WTC11 (cell line): ENCODE measurements at regions of chr3 and their contacts with region 1.

Region 1: DNA sequence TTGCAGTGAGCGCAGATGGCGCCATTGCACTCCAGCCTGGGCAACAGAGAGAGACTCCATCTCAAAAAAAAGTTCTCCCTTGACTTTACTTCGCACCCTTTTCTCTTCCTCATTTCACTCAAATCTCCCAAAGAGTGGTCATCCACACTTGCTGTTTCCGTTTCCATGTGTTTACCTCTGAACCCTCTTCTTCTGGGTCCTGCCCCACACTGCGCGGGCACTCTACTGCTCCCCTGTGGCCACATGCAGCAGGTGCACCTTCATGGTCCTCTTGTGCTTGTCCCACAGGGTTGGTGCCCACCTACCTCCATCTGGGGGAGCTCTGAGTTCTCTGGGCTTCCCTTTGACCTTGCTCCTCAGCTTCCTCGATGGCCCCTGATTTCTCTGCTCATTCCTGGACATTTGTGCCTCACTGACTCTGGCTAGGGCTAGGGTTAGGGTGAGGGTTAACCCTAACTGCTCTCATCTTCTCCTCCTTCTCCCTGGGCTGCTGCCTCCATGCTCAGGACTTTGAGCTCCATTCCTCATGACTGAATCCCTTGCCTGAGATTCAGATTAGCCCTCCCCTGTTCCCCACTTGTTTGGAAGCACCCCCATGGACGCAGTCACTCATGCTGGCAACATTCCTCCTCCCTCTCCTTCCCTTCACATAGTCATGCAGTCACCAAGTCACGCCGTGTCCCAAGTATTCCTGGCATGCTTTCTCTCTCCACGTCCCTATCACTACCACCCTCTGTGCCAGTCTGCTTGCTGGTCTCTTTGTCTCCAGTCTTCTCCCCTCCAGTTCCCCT is 26.6 kb upstream of the KY start:
- DNase-seq: peak; percentile 80
- ATAC-seq: peak; percentile 100
- H3K4me3 Mint-ChIP-seq: no peak overlapping the region
- H3K27ac Mint-ChIP-seq: no peak overlapping the region
- H3K4me1 Mint-ChIP-seq: no peaks in the 10 kb centered on the region; the same call in 1 of the 2 replicates
- H3K27me3 Mint-ChIP-seq: peaks cover 11% of the 10 kb centered on the region
- CTCF ChIP-seq: peak; percentile 69

Region 2: DNA sequence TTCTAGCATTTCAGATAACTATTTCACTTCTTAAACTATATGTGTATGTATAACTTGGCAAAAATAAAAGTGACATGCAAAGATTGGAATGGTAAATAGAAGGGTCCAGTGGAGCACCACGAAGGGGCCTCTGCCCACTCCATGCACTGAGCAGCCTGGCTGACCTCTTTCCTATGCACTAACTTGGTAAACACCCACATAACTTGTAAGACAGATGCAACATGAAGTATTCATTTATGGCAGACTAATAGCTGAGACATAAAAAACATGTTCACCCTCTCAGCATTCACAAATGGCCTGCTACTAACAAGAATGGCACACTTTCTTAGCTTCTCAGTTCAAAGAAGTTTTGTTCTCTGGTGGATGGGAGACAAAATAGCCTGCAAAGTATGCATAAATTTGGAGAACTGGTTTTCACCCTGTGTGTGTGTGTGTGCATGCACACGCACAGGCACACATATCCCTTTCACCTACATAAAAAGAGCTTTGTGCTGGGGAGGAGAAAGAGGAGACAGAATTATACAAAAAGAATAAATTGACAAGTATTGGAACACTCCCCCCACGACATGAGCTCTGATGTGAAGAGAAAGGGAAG is 400.2 kb before region 1 on chr3:
- CTCF ChIA-PET with region 1: no interaction called
- POLR2A ChIA-PET with region 1: no interaction called
- DNase-seq: no peak
- ATAC-seq: no peak
- H3K4me3 Mint-ChIP-seq: no peak overlapping the region
- H3K27ac Mint-ChIP-seq: no peak overlapping the region
- H3K4me1 Mint-ChIP-seq: no peaks in the 10 kb centered on the region
- H3K27me3 Mint-ChIP-seq: no peaks in the 10 kb centered on the region
- CTCF ChIP-seq: no peak

Region 3: GRCh38 chr3:134600685-134601463 is 76.5 kb before region 1 on chr3:
- CTCF ChIA-PET with region 1: interaction called, 63 read pairs
- POLR2A ChIA-PET with region 1: no interaction called
- DNase-seq: peak; percentile 79
- ATAC-seq: peak; percentile 76
- H3K4me3 Mint-ChIP-seq: peak overlapping the region; percentile 65
- H3K27ac Mint-ChIP-seq: no peak overlapping the region
- H3K4me1 Mint-ChIP-seq: peaks cover 15% of the 10 kb centered on the region
- H3K27me3 Mint-ChIP-seq: peaks cover 12% of the 10 kb centered on the region
- CTCF ChIP-seq: peak; percentile 89

Region 4: DNA sequence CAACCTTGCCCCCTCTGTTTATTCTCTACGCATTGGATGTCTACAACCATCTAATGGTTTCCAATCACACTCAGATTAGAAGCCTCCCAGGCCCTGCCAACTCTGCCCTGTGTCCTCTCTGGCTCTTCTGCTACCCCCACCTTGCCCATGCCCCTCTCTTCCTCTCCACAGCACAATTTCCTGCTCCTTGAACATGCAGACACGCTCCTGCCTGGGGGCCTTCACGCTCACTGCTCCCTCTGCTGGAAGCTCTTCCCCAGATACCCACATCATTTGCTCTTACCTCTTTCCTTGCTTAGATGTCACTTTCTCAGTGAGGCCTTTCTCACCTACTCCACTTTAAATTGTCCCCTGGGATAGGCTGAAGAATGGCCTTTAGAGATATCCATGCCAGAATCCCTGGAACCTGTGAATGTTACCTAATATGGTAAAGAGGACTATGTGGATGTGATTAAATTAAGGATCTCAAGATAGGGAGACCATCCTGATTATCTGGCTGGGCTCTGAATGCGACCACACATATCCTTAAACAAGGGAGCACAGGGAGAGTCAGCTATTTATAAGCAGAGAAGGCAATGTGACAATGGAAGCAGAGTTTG is 36.4 kb before region 1 on chr3:
- CTCF ChIA-PET with region 1: interaction called, 18 read pairs
- POLR2A ChIA-PET with region 1: no interaction called
- DNase-seq: peak; percentile 57
- ATAC-seq: peak; percentile 75
- H3K4me3 Mint-ChIP-seq: no peak overlapping the region
- H3K27ac Mint-ChIP-seq: no peak overlapping the region
- H3K4me1 Mint-ChIP-seq: peaks cover 37% of the 10 kb centered on the region
- H3K27me3 Mint-ChIP-seq: peaks cover 31% of the 10 kb centered on the region
- CTCF ChIP-seq: peak; percentile 35; the same call in 1 of the 2 replicates

Region 5: DNA sequence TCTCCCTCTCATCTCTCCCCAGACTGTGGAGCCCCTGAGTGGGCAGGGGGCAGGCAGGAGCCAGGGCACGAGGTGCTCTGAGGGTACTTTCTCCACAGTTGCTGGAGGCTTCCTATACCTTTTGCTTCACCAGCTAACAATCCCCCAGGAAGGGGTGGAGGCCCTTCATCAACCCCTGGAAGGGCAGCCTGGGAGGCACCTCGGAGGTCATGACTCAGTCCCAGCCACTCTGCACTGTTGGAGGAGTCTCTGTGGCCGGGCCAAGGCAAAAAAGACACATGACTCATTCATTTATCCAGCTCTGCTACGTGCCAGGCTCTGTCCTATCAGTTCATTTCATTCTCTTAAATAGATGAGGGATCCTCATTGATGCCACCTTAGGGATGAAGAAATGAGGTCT is 10.9 kb before region 1 on chr3:
- CTCF ChIA-PET with region 1: interaction called, 15 read pairs
- POLR2A ChIA-PET with region 1: no interaction called
- DNase-seq: no peak
- ATAC-seq: no peak
- H3K4me3 Mint-ChIP-seq: no peak overlapping the region
- H3K27ac Mint-ChIP-seq: no peak overlapping the region
- H3K4me1 Mint-ChIP-seq: peaks cover 3% of the 10 kb centered on the region; the same call in 1 of the 2 replicates
- H3K27me3 Mint-ChIP-seq: peaks cover 6% of the 10 kb centered on the region; the same call in 1 of the 2 replicates
- CTCF ChIP-seq: no peak

Region 6: GRCh38 chr3:134761213-134761612 is 83.8 kb after region 1 on chr3:
- CTCF ChIA-PET with region 1: interaction called, 21 read pairs
- POLR2A ChIA-PET with region 1: no interaction called
- DNase-seq: no peak
- ATAC-seq: no peak
- H3K4me3 Mint-ChIP-seq: no peak overlapping the region
- H3K27ac Mint-ChIP-seq: no peak overlapping the region
- H3K4me1 Mint-ChIP-seq: no peaks in the 10 kb centered on the region
- H3K27me3 Mint-ChIP-seq: no peaks in the 10 kb centered on the region
- CTCF ChIP-seq: no peak